Transverse colon (tissue), 4 donors: ENCODE measurements at regions of chr5 and their contacts with region 1.

Region 1: GRCh38 chr5:68460147-68460798 is 244.7 kb downstream of the PIK3R1 start:
- DNase-seq: peak; percentile 26
- H3K4me3 ChIP-seq: no peak overlapping the region
- H3K27ac ChIP-seq: no peak overlapping the region
- H3K4me1 ChIP-seq: peaks cover 0 to 19% (median 3%) of the 10 kb centered on the region in 4 donors
- H3K27me3 ChIP-seq: no peaks in the 10 kb centered on the region
- CTCF ChIP-seq: peak; percentile 63 to 73 (median 69)
- EP300 ChIP-seq: no peak
- POLR2A ChIP-seq: no peak

Region 2: DNA sequence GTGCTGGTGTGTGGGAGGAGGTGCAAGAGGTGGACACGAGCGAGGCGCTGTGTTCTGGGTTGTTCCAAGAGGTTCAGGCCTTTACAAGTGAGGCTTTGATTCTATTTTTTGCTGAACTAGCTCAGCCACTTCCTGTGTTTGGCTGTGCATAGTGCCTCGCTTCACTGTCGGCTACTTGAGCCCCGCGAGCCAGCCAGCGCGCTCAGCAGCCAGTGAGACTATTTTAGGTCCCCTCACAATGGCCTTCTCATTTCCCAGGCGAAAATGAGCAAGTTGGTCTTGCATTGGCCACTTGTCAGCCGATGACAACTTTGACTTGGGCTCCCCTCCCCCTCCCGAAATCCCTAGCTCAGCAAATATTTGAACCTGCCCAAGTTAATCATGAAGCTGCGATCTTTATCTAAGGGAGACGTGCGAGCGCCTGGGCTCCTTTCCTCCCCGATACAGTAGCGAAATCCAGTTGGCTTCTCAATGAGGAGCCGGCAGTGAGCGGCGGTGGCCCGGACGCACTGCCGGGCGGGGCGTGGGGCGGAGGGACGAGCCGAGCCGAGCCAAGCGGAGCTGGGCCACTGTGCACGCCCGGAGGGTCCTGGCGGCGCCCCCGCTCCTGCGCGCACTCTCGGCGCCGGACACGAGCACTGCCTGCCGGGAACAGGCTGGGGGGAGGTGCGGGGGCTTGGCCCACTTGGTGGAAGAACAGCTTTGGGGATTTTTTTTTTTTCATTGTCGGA is 172.1 kb before region 1 on chr5:
- in situ Hi-C with region 1: loop called (anchors 5 to 25 kb)
- intact Hi-C with region 1: no loop called
- DNase-seq: peak; percentile 66
- H3K4me3 ChIP-seq: peak overlapping the region; percentile 24 to 60 (median 40)
- H3K27ac ChIP-seq: peak overlapping the region; percentile 84 to 93 (median 90)
- H3K4me1 ChIP-seq: peaks cover 37 to 89% (median 66%) of the 10 kb centered on the region in 4 donors
- H3K27me3 ChIP-seq: no peaks in the 10 kb centered on the region
- CTCF ChIP-seq: peak in 1 of 5 experiments; percentile 38
- EP300 ChIP-seq: no peak
- POLR2A ChIP-seq: peak; percentile 42

Region 3: GRCh38 chr5:68641211-68641610 is 180.9 kb after region 1 on chr5:
- in situ Hi-C with region 1: no loop called
- intact Hi-C with region 1: loop called (anchors 5 kb)
- DNase-seq: no peak
- H3K4me3 ChIP-seq: no peak overlapping the region
- H3K27ac ChIP-seq: no peak overlapping the region
- H3K4me1 ChIP-seq: no peaks in the 10 kb centered on the region
- H3K27me3 ChIP-seq: no peaks in the 10 kb centered on the region
- CTCF ChIP-seq: no peak
- EP300 ChIP-seq: no peak
- POLR2A ChIP-seq: no peak